ENCODE measurements at regions of chr11 and their contacts with region 1.

Region 1: GRCh38 chr11:33542921-33543320 is 157.7 kb downstream of the C11orf91 start:
- DNase-seq: no peak
- H3K4me3 ChIP-seq: no peak overlapping the region
- H3K27ac ChIP-seq: no peak overlapping the region
- H3K4me1 ChIP-seq: peaks cover 0 to 22% (median 2%) of the 10 kb centered on the region in 6 donors
- H3K27me3 ChIP-seq: peaks cover 0 to 18% (median 0%) of the 10 kb centered on the region in 7 donors
- CTCF ChIP-seq: peak in 10 of 11 experiments; percentile 32 to 77 (median 60)
- POLR2A ChIP-seq: no peak

Region 2: DNA sequence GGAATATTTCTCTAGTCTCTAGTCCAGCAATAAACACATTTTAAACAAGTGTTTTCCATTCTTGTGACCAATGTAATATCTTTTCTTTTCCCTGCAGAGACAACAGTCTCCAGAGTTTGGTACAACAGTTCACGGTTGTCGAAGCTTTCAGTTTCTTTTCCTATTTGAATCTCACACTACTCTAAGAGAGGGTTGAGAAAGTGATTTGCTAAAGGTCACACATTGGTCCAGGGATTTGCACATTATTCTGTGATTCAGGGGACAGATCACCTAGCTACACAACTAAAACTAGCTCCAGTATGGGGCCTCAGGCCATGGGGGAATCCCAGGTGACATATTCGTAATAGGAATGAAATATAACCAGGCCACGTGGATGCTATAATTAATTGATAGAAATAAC is 153.3 kb before region 1 on chr11:
- intact Hi-C with region 1: loop called (anchors 10 kb)
- DNase-seq: no peak
- H3K4me3 ChIP-seq: no peak overlapping the region
- H3K27ac ChIP-seq: no peak overlapping the region
- H3K4me1 ChIP-seq: peaks cover 0 to 31% (median 9%) of the 10 kb centered on the region in 6 donors
- H3K27me3 ChIP-seq: no peaks in the 10 kb centered on the region
- CTCF ChIP-seq: no peak
- POLR2A ChIP-seq: no peak

Region 3: GRCh38 chr11:33598426-33599069 is 55.6 kb after region 1 on chr11:
- intact Hi-C with region 1: no loop called
- DNase-seq: no peak
- H3K4me3 ChIP-seq: no peak overlapping the region
- H3K27ac ChIP-seq: no peak overlapping the region
- H3K4me1 ChIP-seq: no peaks in the 10 kb centered on the region
- H3K27me3 ChIP-seq: peaks cover 0 to 38% (median 0%) of the 10 kb centered on the region in 7 donors
- CTCF ChIP-seq: no peak
- POLR2A ChIP-seq: no peak